Right cardiac atrium (tissue), 5 donors: ENCODE measurements at regions of chr15 and their contacts with region 1.

Region 1: DNA sequence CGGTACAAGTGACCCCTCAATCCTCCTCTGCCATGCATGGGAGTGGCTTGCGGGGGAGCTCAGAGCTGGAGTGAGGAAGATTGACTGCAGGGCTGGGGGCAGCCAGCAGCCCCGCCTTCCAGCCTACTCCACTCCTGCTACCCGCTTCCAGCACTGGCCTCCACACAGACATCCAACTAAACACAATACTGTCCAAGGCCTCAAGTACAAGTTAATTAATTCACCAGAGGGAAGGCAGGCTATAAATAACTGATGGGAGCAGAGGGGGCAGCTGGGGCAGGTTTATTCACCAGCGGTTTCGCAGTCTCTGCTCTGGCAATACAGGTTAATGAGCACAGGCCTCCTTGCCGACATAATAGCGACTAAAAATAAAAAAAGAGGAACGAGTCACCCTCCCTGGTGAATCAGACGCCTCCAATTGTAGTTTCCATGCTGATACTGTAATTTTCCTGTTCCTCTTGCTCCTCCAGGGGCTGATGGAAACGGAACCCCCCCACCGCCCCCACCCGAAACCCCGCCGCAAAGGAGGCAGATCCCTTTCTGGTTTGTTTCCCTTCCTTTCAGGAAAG is 166.4 kb upstream of the TLE3 start:
- DNase-seq: peak in 1 of 3 donors; percentile 55
- ATAC-seq: peak in 1 of 2 donors; percentile 14
- H3K4me3 ChIP-seq: no peak overlapping the region
- H3K27ac ChIP-seq: no peak overlapping the region
- H3K4me1 ChIP-seq: peaks cover 20% of the 10 kb centered on the region
- H3K27me3 ChIP-seq: no peaks in the 10 kb centered on the region

Region 2: GRCh38 chr15:69623392-69624152 is 640.5 kb before region 1 on chr15:
- intact Hi-C with region 1: no loop called
- DNase-seq: no peak
- ATAC-seq: no peak
- H3K4me3 ChIP-seq: no peak overlapping the region
- H3K27ac ChIP-seq: no peak overlapping the region
- H3K4me1 ChIP-seq: no peaks in the 10 kb centered on the region
- H3K27me3 ChIP-seq: no peaks in the 10 kb centered on the region

Region 3: DNA sequence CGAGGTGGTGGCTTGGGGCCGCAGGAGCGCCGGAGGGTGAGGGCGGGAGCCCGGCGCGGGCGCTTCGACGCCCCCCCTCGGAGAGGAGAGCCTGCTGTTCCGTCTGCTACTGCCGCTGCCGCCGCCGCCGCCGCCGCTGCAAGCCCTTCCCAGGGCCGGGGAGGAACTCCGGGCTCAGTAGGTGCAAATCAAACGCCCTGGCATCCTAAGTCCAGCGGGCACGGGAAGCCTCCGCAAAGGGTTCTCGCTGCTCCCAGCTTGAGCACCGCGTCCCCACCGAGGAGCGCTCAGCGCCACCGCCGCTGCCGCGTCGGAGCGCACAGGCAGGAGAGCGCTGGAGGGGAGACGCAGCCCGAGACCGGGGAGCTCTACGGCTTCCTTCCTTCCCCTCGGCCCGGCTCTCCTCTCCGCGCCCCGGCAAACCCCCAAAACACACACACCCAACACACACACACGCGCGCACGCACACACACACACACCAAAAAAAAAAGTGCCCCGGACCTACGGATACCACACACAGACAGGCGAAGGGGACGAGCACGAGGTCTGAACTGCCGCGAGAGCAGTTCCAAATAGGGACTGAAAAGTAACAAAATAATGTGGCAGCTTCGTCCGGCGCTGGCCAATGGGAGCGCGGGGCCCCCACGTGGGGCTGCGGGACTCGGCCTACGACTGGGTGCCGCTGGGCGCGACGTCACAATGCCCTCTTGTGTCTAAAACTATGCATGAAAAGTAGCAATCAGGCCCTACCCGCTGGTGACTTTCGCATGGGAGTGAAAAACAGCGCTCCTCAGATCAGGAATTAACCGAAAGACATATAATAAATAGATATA is 166.5 kb before region 1 on chr15 and contains the start of gene TLE3:
- intact Hi-C with region 1: loop called in 2 of 4 experiments (anchors 10 kb)
- DNase-seq: peak; percentile 99 to 100 (median 99)
- ATAC-seq: peak; percentile 77 to 81
- H3K4me3 ChIP-seq: peak within 1 kb of the TSS; percentile 91
- H3K27ac ChIP-seq: peak within 1 kb of the TSS; percentile 86
- H3K4me1 ChIP-seq: peaks cover 13% of the 10 kb centered on the region
- H3K27me3 ChIP-seq: no peaks in the 10 kb centered on the region
- total RNA-seq, gene TLE3: 20.6 to 35.4 (median 27.4) TPM

Region 4: DNA sequence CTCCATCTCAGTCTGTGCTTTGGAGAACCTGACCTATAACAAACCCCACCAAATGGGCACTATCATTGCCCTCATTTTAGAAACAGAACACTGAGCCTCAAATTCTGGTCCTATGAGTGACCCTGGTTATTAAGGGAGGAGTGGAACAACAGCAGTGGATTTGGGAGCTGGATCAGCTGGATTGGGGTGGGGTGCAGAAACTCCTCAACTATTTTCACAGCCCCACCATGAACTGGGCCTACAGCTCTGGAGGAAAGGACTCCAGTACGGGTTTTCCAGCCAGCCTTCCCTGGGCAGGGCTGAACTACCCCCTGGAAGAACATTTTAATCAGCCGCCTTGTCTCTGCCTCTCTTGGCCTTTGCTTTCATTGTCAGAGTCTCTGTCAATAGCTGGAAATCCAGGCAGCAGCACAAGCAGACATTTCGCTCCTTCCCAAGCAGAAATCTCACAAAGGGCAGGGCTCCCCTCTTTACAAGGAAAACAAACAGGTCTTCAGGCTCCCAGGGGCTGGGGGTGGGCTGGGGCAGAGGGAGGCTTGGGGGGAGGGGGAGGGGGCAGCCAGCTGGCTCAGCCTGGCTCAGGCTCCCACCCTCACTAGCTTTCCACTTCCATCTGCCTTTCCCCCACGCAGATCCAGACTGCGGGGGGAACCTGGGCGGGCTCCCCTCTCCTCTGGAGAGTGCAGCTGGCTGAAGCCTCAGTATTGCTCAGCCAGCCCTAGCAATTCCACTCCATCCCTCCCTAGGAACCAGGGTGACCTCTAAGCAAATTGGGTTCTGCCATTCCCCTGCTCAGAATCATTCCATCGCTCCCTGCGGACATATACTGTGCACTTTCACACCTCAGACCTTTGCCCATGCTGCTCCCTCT is 152.7 kb before region 1 on chr15:
- intact Hi-C with region 1: loop called in 3 of 4 experiments (anchors 10 kb)
- DNase-seq: peak; percentile 80 to 91 (median 81)
- ATAC-seq: peak; percentile 94 to 96
- H3K4me3 ChIP-seq: peak overlapping the region; percentile 37
- H3K27ac ChIP-seq: peak overlapping the region; percentile 88
- H3K4me1 ChIP-seq: peaks cover 9% of the 10 kb centered on the region
- H3K27me3 ChIP-seq: no peaks in the 10 kb centered on the region

Region 5: DNA sequence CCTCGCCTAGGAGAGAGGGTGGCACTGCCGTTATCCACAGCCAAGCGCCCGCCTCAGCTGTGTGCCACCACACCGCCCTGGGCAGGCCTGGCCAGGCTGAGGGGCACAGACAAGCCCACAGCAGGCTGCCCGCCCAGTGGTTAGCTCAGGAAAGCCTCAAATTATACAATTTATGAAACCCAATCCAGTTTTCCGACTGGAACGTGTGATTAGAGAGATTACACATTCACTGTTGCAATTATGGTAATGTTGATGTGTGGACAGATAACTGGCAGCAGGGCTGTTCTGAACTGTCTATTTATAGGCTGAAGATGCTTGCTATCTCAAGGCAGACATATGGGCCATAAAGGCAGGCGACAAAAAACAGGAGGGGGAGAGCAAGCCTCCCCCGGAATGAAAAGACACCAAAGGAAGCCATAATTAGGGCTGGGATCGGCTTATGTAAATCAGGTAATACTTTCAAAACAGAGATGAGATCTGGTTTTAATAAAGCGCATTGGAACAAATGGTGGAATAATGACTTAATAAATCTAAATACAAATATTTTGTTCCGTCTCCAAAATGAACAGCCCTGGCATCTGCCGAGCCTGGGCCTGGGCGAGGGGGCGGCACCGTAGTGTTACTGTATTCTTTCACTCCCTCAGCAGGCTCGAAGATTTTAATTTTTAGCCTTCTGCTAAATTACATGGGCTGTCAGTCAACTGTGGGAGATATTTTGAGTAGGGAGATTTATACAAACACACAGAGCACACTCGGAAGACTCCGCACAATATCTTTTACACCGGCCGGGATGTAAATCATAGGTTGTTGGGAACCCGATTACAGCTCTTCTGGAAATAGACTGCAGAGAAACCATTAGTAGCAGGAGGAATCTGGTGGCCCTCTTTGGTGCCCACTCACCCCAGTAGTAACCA is 63.3 kb before region 1 on chr15:
- intact Hi-C with region 1: no loop called
- DNase-seq: no peak
- ATAC-seq: no peak
- H3K4me3 ChIP-seq: no peak overlapping the region
- H3K27ac ChIP-seq: no peak overlapping the region
- H3K4me1 ChIP-seq: peaks cover 8% of the 10 kb centered on the region
- H3K27me3 ChIP-seq: no peaks in the 10 kb centered on the region